CD14-positive monocyte (primary cell): ENCODE measurements at regions of chr12 and their contacts with region 1.

Region 1: GRCh38 chr12:121334513-121335343 is 17.5 kb downstream of the ANAPC5 start:
- DNase-seq: peak; percentile 48 to 79 (median 70)
- H3K4me3 ChIP-seq: no peak overlapping the region
- H3K4me3 Mint-ChIP-seq: no peak overlapping the region
- H3K27ac ChIP-seq: peak overlapping the region in 1 of 2 donors; percentile 41
- H3K27ac Mint-ChIP-seq: peak overlapping the region in 2 of 7 donors; percentile 15 to 36
- H3K4me1 ChIP-seq: no peaks in the 10 kb centered on the region
- H3K4me1 Mint-ChIP-seq: no peaks in the 10 kb centered on the region
- H3K27me3 ChIP-seq: no peaks in the 10 kb centered on the region
- H3K27me3 Mint-ChIP-seq: peaks cover 0 to 3% (median 0%) of the 10 kb centered on the region in 3 donors
- CTCF ChIP-seq: peak; percentile 88

Region 2: GRCh38 chr12:121274036-121274763 is 60.5 kb before region 1 on chr12:
- intact Hi-C with region 1: no loop called
- DNase-seq: no peak
- H3K4me3 ChIP-seq: no peak overlapping the region
- H3K4me3 Mint-ChIP-seq: no peak overlapping the region
- H3K27ac ChIP-seq: peak overlapping the region in 1 of 2 donors; percentile 62
- H3K27ac Mint-ChIP-seq: peak overlapping the region in 5 of 7 donors; percentile 26 to 99 (median 77)
- H3K4me1 ChIP-seq: peaks cover 27 to 30% of the 10 kb centered on the region in 2 donors
- H3K4me1 Mint-ChIP-seq: peaks cover 34% of the 10 kb centered on the region
- H3K27me3 ChIP-seq: no peaks in the 10 kb centered on the region
- H3K27me3 Mint-ChIP-seq: peaks cover 0 to 3% (median 2%) of the 10 kb centered on the region in 3 donors
- CTCF ChIP-seq: no peak

Region 3: DNA sequence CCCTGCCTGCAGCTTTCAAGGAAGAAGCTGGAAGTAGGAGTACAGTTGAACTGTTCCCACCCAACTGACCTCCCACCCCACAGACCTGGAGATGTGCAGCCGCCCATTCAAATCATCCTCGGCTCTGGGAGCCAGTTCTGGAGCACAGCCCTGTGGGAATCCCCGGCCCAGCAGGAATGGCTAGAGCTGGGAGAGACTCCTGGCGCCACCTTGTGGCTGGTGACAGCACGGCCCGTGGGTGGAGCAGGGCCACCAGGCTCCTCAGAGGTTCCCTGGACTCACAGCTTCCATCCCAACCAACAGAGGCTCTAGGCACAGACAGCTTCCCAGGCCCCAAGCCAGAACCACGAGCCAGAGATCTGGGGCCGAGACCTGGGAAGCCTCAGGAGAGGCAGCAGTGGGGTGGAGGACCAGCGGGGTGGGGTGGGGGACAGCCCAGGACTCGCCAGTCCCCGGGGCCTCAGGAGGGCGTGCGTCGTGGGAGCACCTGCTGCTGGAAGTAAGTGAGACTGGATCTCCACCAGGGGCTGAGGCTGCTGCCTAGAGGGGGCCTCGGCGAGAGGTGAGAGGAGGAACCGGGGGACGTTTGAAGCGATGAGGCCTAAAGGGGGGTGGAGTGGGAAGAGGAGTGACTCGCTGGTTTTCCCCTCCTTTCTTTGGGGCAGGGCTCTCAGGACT is 108.6 kb after region 1 on chr12:
- intact Hi-C with region 1: loop called (anchors 5 kb)
- DNase-seq: peak; percentile 54 to 77 (median 74)
- H3K4me3 ChIP-seq: no peak overlapping the region
- H3K4me3 Mint-ChIP-seq: no peak overlapping the region
- H3K27ac ChIP-seq: peak overlapping the region in 1 of 2 donors; percentile 36
- H3K27ac Mint-ChIP-seq: peak overlapping the region; percentile 35 to 87 (median 80)
- H3K4me1 ChIP-seq: no peaks in the 10 kb centered on the region
- H3K4me1 Mint-ChIP-seq: peaks cover 4% of the 10 kb centered on the region
- H3K27me3 ChIP-seq: no peaks in the 10 kb centered on the region
- H3K27me3 Mint-ChIP-seq: no peaks in the 10 kb centered on the region
- CTCF ChIP-seq: peak; percentile 90